A673 (cell line): ENCODE measurements at regions of chr1 and their contacts with region 1.

Region 1: GRCh38 chr1:175758601-175759000 is 15.2 kb upstream of the TNR start:
- DNase-seq: no peak
- H3K4me3 ChIP-seq: no peak overlapping the region
- H3K27ac ChIP-seq: no peak overlapping the region
- H3K4me1 ChIP-seq: no peaks in the 10 kb centered on the region
- H3K27me3 ChIP-seq: peaks cover 10% of the 10 kb centered on the region
- CTCF ChIP-seq: no peak

Region 2: DNA sequence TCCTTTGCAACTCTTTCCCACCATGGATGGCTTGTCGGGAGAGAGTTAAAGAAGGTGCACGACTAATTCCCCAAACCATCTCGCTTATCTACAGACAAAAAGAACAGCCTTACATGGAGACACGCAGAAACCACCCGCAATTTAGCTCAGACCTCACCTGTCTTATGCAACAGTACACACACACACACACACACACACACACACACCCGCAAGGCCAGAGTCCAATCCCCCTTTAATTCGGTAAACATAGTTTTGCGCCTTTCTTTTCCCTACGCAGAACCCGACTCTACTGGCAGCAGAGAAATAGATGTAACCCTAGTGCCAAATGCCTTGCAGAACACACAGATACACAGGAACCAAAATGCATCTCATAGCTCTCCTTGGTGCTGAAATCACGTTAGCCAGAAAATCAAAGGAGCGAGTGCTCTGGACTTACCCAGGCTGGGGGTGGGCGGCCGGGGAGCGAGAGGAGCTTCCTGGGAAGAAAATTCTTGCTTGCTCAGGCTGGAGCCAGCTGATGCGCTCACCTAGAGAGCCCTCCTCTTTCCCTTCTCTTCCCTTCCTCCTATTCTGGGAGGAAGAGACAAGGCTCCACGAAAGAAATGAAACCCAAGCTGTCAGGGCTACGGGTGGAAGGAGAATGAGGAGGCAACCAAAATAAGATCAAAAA is 15.7 kb before region 1 on chr1:
- CTCF ChIA-PET with region 1: interaction called, 17 read pairs
- POLR2A ChIA-PET with region 1: no interaction called
- intact Hi-C with region 1: no loop called
- DNase-seq: peak; percentile 59
- H3K4me3 ChIP-seq: no peak overlapping the region
- H3K27ac ChIP-seq: no peak overlapping the region
- H3K4me1 ChIP-seq: no peaks in the 10 kb centered on the region
- H3K27me3 ChIP-seq: peaks cover 21% of the 10 kb centered on the region
- CTCF ChIP-seq: no peak

Region 3: GRCh38 chr1:177023726-177024125 is 1265.1 kb after region 1 on chr1:
- CTCF ChIA-PET with region 1: no interaction called
- POLR2A ChIA-PET with region 1: no interaction called
- intact Hi-C with region 1: no loop called
- DNase-seq: no peak
- H3K4me3 ChIP-seq: no peak overlapping the region
- H3K27ac ChIP-seq: no peak overlapping the region
- H3K4me1 ChIP-seq: no peaks in the 10 kb centered on the region
- H3K27me3 ChIP-seq: no peaks in the 10 kb centered on the region
- CTCF ChIP-seq: no peak